Activated CD4-positive, alpha-beta memory T cell treated with anti-CD3 and anti-CD28 coated beads for 36 hours (primary cell): ENCODE measurements at regions of chr11 and their contacts with region 1.

Region 1: GRCh38 chr11:56776809-56777208 is 28.3 kb upstream of the OR9G4 start:
- DNase-seq: no peak
- H3K4me3 Mint-ChIP-seq: no peak overlapping the region
- H3K27ac Mint-ChIP-seq: no peak overlapping the region
- H3K4me1 Mint-ChIP-seq: no peaks in the 10 kb centered on the region
- H3K27me3 Mint-ChIP-seq: no peaks in the 10 kb centered on the region

Region 2: GRCh38 chr11:55726715-55727324 is 1050.0 kb before region 1 on chr11:
- CTCF ChIA-PET with region 1: no interaction called
- POLR2A ChIA-PET with region 1: no interaction called
- intact Hi-C with region 1: loop called (anchors 5 kb)
- DNase-seq: no peak
- H3K4me3 Mint-ChIP-seq: no peak overlapping the region
- H3K27ac Mint-ChIP-seq: no peak overlapping the region
- H3K4me1 Mint-ChIP-seq: no peaks in the 10 kb centered on the region
- H3K27me3 Mint-ChIP-seq: no peaks in the 10 kb centered on the region

Region 3: DNA sequence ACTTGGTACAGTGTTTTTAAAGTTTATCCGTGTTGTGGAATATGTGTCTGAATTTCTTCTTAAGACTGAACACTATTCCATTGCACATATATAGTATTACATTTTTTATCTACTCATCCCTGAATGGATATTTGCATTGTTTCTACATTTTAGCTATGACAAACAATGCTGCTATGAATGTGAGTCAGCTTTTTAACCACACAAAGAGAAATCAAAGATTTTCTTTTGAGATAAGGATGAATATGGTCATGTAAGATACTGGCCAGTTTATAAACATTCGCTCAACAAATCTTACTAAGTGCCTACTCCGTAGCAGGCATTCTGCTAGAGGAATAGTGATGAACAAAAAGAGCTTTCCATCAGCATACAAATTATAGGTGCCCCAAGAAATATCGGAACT is 11.8 kb before region 1 on chr11:
- CTCF ChIA-PET with region 1: no interaction called
- POLR2A ChIA-PET with region 1: no interaction called
- intact Hi-C with region 1: no loop called
- DNase-seq: no peak
- H3K4me3 Mint-ChIP-seq: no peak overlapping the region
- H3K27ac Mint-ChIP-seq: no peak overlapping the region
- H3K4me1 Mint-ChIP-seq: no peaks in the 10 kb centered on the region
- H3K27me3 Mint-ChIP-seq: no peaks in the 10 kb centered on the region